Mucosa of descending colon (tissue), 3 donors: ENCODE measurements at regions of chr15 and their contacts with region 1.

Region 1: DNA sequence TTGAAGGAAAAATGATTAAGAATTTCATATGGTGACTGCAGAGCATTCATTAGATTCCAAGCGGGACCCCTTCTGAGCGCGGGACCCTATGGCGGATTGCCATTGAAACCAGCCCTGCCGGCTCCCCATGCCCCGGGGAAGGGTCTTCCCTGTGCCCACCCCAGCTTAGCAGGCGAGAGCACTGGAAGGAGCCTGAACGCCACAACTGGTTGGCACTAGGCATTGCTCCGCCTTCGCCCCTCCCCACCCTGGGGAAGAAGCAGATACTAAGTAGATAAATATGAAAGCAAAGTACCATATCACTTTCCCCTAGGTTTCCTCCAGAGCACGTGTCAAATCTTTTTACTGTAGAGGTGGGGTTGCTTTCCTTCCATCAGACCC is 70.7 kb downstream of the CYP19A1 start:
- DNase-seq: peak in 2 of 3 donors; percentile 23 to 41
- ATAC-seq: peak; percentile 37
- H3K4me3 ChIP-seq: no peak overlapping the region
- H3K4me1 ChIP-seq: peaks cover 11% of the 10 kb centered on the region
- CTCF ChIP-seq: no peak

Region 2: GRCh38 chr15:51322621-51323296 is 55.1 kb after region 1 on chr15:
- intact Hi-C with region 1: loop called in 1 of 2 experiments (anchors 5 kb)
- DNase-seq: no peak
- ATAC-seq: peak; percentile 32
- H3K4me3 ChIP-seq: no peak overlapping the region
- H3K4me1 ChIP-seq: no peaks in the 10 kb centered on the region
- CTCF ChIP-seq: no peak